ENCODE measurements at regions of chr22 and their contacts with region 1.

Region 1: GRCh38 chr22:31970490-31971444 is 26.4 kb downstream of the YWHAH start:
- DNase-seq: peak; percentile 92
- H3K4me3 Mint-ChIP-seq: peak overlapping the region; percentile 72
- H3K27ac Mint-ChIP-seq: no peak overlapping the region
- H3K4me1 Mint-ChIP-seq: peaks cover 12% of the 10 kb centered on the region
- H3K27me3 Mint-ChIP-seq: no peaks in the 10 kb centered on the region

Region 2: GRCh38 chr22:31872209-31872608 is 98.6 kb before region 1 on chr22:
- CTCF ChIA-PET with region 1: interaction called, 11 read pairs
- POLR2A ChIA-PET with region 1: no interaction called
- intact Hi-C with region 1: no loop called
- DNase-seq: peak; percentile 17
- H3K4me3 Mint-ChIP-seq: no peak overlapping the region
- H3K27ac Mint-ChIP-seq: no peak overlapping the region
- H3K4me1 Mint-ChIP-seq: no peaks in the 10 kb centered on the region
- H3K27me3 Mint-ChIP-seq: no peaks in the 10 kb centered on the region

Region 3: GRCh38 chr22:31943976-31944699 is 26.6 kb before region 1 on chr22 and contains the start of gene YWHAH:
- CTCF ChIA-PET with region 1: interaction called, 36 read pairs
- POLR2A ChIA-PET with region 1: interaction called, 3 read pairs
- intact Hi-C with region 1: no loop called
- DNase-seq: peak; percentile 95
- H3K4me3 Mint-ChIP-seq: no peak within 1 kb of the TSS
- H3K27ac Mint-ChIP-seq: peak within 1 kb of the TSS; percentile 88
- H3K4me1 Mint-ChIP-seq: peaks cover 22% of the 10 kb centered on the region
- H3K27me3 Mint-ChIP-seq: no peaks in the 10 kb centered on the region
- total RNA-seq, gene YWHAH: 137 to 142 TPM

Region 4: DNA sequence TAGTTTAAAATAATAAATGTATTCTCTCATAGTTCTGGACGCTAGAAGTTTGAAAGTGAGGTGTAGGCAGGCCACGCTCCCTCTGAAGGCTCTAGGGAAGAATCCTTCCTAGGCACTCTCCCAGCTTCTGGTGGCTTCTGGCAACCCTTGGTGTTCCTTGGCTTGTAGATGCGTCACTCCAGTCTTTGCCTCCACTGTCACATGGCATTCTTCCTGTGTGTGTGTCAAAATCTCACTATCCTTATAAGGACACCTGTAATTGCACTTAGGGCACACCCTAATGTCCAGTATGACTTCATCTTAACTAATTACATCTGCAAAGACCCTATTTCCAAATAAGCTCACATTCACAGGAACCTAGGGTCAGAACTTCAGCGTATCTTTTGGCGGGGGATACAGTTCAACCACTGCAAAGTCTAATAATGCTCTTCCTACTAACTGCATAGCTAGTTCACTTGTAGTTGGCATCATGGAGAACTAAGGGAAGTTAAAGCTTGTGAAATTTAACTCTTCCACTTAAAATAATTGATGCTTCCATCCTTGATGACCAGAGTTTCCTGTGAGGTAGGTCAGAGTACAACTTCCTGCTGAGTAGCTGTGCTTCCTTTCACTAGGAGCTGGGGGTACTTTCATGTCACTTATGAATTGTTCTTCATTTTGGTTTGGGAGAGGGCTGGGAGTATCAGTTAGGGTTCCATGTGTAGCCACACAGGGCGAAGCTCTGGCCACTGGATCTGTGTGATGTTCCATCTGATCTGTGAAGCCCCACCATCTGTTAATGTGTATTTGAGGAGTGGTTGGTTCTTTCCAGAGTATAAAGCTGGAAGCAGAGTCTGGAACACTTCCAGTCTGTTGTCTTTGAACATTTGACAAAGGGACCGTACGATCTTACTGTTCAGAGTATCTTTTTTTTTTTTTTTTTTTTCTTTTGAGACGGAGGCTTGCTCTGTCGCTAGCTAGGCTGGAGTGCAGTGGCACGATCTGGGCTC is 15.9 kb before region 1 on chr22:
- CTCF ChIA-PET with region 1: interaction called, 86 read pairs
- POLR2A ChIA-PET with region 1: interaction called, 3 read pairs
- intact Hi-C with region 1: loop called (anchors 1 kb)
- DNase-seq: no peak
- H3K4me3 Mint-ChIP-seq: no peak overlapping the region
- H3K27ac Mint-ChIP-seq: peak overlapping the region; percentile 40
- H3K4me1 Mint-ChIP-seq: peaks cover 91% of the 10 kb centered on the region
- H3K27me3 Mint-ChIP-seq: no peaks in the 10 kb centered on the region

Region 5: DNA sequence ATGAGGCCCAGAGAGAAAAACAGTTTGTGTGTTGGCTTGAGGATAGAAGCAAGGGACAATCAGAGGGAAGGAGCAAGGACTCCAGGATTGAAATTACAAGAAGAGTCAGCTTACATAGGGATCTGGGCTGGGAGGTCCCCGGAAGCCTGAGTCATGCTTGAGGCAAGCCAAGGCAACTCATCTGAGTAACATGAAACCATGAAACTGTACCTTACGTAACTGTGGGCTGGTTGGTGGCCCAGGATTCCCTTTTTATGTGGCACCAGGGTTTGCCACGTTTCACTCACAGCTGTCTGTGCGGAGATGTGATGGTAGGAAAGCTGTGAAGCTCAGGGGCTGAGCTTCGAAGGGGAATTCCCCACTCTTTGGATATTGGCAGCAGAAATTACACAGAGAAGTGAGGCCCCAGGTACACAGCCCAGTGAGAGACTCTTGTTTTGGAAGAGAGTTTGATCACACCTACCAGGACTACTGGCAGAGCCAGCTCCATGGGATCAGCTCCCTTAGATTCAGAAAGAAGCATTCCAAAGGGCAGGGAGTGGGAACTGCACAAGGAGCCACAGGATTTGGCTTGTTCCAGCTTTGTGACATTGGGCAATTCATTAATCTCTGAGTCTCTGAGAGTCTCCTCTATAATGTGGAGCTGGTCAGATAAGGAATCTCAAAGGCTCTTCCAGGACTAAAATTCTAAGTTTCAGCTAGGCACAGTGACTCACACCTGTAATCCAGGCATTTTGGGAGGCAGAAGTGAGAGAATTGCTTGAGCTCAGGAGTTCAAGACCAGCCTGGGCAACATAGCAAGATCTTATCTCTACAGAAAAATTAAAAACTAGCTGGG is 80.1 kb after region 1 on chr22:
- CTCF ChIA-PET with region 1: interaction called, 19 read pairs
- POLR2A ChIA-PET with region 1: no interaction called
- intact Hi-C with region 1: no loop called
- DNase-seq: peak; percentile 94
- H3K4me3 Mint-ChIP-seq: no peak overlapping the region
- H3K27ac Mint-ChIP-seq: peak overlapping the region; percentile 26
- H3K4me1 Mint-ChIP-seq: peaks cover 20% of the 10 kb centered on the region
- H3K27me3 Mint-ChIP-seq: peaks cover 52% of the 10 kb centered on the region

Region 6: GRCh38 chr22:32080904-32081303 is 110.1 kb after region 1 on chr22:
- CTCF ChIA-PET with region 1: interaction called, 241 read pairs
- POLR2A ChIA-PET with region 1: no interaction called
- intact Hi-C with region 1: no loop called
- DNase-seq: peak; percentile 38
- H3K4me3 Mint-ChIP-seq: no peak overlapping the region
- H3K27ac Mint-ChIP-seq: no peak overlapping the region
- H3K4me1 Mint-ChIP-seq: no peaks in the 10 kb centered on the region
- H3K27me3 Mint-ChIP-seq: peaks cover 10% of the 10 kb centered on the region

Region 7: DNA sequence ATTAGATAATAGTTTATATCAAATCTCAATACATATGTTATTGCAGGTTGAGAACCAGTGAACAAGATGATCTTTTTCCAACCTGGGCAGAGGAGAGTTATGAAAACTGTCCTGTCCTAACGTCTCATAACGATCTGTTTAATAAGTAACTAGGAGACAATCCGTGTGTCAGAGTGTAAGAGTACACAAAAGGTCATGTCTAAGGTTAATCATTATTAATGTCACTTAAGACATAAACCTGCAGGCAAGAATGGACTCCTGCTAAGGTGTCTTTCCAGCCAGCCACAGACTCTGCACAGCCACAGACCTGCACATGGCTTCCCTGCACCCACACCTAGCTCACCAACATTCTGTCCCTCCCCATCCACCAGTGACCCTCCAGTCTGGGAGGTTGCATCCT is 274.3 kb after region 1 on chr22:
- CTCF ChIA-PET with region 1: no interaction called
- POLR2A ChIA-PET with region 1: no interaction called
- intact Hi-C with region 1: no loop called
- DNase-seq: no peak
- H3K4me3 Mint-ChIP-seq: no peak overlapping the region
- H3K27ac Mint-ChIP-seq: no peak overlapping the region
- H3K4me1 Mint-ChIP-seq: no peaks in the 10 kb centered on the region
- H3K27me3 Mint-ChIP-seq: peaks cover 9% of the 10 kb centered on the region

Measured in activated CD4-positive, alpha-beta memory T cell treated with anti-CD3 and anti-CD28 coated beads for 36 hours (primary cell).